PC-9 (cell line): ENCODE measurements at regions of chr4 and their contacts with region 1.

Region 1: DNA sequence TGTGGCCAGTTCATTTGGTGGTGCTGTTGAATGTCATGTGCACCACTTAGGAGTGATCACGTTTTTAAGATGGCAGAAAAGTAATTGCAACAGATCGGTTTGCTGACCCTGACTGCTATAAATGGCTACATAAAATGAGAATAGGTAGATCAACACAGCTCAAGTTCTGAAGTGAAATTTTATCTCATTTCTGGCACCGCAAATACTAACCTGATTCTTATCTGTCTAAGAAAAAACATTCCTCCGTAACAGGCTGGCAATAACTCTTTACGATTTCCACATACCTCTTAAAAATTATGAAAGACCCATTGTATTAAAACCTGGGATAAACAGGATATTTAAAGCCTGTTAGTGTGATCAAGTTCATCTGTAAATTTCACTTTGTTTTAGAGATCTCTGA is 387.5 kb downstream of the PDGFC start:
- DNase-seq: peak; percentile 8 to 67
- H3K4me3 ChIP-seq: no peak overlapping the region
- H3K27ac ChIP-seq: peak overlapping the region; percentile 29
- H3K4me1 ChIP-seq: peaks cover 10% of the 10 kb centered on the region
- H3K27me3 ChIP-seq: no peaks in the 10 kb centered on the region
- CTCF ChIP-seq: no peak

Region 2: GRCh38 chr4:156536661-156537060 is 47.4 kb before region 1 on chr4:
- CTCF ChIA-PET with region 1: no interaction called
- POLR2A ChIA-PET with region 1: interaction called, 4 read pairs
- intact Hi-C with region 1: loop called (anchors 5 kb)
- DNase-seq: peak in 1 of 2 experiments; percentile 36
- H3K4me3 ChIP-seq: no peak overlapping the region
- H3K27ac ChIP-seq: no peak overlapping the region
- H3K4me1 ChIP-seq: no peaks in the 10 kb centered on the region
- H3K27me3 ChIP-seq: no peaks in the 10 kb centered on the region
- CTCF ChIP-seq: no peak